CD4-positive, alpha-beta T cell (primary cell): ENCODE measurements at regions of chr13 and their contacts with region 1.

Region 1: DNA sequence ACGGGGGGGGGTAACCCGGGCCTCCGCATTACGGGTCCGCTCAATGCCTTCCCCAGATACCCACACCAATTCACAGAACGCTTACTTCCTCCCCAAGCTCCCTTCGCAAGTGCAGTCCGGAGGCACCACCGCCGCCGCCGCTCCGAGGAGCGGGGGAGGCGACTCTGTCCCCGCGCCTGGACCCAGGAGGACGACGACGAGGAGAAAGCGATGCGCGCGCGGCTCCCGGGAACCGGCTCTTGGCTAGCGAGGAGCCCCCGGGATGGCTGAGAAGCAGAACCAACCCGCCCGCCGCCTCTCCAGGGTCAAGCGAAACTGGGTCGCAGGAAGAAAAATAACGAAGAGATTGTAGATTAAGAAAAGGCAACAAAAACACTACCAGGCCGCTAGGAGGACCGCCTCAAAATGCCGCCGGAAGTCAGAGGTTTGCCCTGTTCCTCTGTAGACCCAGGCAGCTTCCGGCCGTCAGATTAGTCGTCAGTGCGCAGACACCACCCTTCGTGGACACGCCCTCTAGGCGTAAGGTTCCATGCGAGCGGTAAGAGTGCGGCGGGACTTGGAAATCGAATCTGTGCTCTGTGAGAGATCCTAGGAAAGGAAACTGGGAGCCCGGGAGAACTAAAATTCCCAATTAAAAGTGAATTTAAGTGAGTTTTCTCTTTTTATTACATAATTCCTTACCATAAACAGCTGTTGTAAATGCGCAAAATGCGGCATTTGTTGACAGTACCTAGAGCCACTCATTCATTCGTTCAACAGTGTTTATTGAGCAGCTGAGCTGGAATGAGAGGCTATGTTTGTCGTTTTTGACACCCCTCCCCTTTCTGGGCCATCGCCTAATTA is at the start of gene ZC3H13:
- DNase-seq: peak; percentile 87 to 98 (median 89)
- ATAC-seq: peak; percentile 96
- H3K4me3 ChIP-seq: peak within 1 kb of the TSS; percentile 84
- H3K4me3 Mint-ChIP-seq: peak within 1 kb of the TSS; percentile 91
- H3K27ac ChIP-seq: peak within 1 kb of the TSS; percentile 97
- H3K27ac Mint-ChIP-seq: peak within 1 kb of the TSS; percentile 86
- H3K4me1 ChIP-seq: peaks cover 2% of the 10 kb centered on the region
- H3K4me1 Mint-ChIP-seq: peaks cover 53% of the 10 kb centered on the region
- H3K27me3 ChIP-seq: peaks cover 0 to 10% of the 10 kb centered on the region in 2 experiments
- H3K27me3 Mint-ChIP-seq: peaks cover 22% of the 10 kb centered on the region
- CTCF ChIP-seq: peak; percentile 48
- total RNA-seq, gene ZC3H13: 36.5 to 43.8 TPM

Region 2: DNA sequence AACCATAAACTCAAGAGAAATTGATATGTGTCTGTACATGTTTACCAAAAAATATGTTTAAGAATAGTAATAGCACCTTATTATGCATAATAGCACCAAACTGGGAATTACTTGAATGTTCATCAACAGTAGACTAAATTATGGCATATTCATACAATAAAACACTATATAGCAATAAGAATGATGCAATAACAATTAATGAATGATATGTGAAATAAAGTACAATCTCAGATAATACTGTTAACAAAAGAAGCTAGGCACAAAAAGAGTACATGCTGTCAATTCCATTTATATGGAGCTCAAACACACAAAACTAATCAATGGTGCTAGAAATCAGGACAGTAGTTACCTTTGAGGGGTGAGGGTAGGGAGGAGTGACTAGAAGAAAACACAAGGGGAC is 36.3 kb before region 1 on chr13:
- CTCF ChIA-PET with region 1: no interaction called
- POLR2A ChIA-PET with region 1: no interaction called
- intact Hi-C with region 1: no loop called
- DNase-seq: no peak
- ATAC-seq: no peak
- H3K4me3 ChIP-seq: no peak overlapping the region
- H3K4me3 Mint-ChIP-seq: no peak overlapping the region
- H3K27ac ChIP-seq: no peak overlapping the region
- H3K27ac Mint-ChIP-seq: no peak overlapping the region
- H3K4me1 ChIP-seq: no peaks in the 10 kb centered on the region
- H3K4me1 Mint-ChIP-seq: no peaks in the 10 kb centered on the region
- H3K27me3 ChIP-seq: no peaks in the 10 kb centered on the region
- H3K27me3 Mint-ChIP-seq: no peaks in the 10 kb centered on the region
- CTCF ChIP-seq: no peak

Region 3: DNA sequence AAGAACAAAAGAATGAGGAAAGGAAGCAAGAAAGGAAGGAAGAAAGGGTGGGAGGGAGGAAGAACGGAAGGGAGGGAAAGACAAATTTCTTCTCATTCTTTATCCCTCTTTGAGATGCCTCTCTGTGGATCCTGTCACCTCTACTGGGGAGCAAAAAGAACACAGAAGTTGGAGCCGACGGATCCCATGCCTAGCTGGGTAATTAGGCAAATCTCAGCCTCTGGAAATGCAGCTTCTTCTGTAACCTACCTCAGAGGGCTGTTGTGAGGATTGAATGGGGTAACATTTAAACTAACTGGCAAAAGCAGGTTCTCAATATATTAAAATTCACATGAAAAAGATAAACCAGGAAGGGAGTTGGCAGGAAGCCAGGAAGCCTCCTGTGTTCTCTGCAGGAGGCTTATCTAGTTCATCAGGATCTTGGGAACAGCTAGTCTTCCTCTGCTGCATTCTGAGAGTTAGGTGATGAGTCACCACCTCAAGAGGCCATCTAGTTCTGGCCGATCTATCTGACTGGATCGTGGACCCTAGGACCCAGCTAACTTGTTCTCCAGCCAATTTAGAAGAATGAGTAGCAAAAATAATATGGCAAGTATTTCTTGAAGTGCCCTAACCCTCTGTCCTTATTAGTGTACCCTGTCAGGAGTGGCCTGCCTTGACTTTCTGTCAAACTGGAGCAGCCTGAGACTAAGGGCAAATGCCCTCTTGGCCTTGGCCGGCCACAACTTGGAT is 67.5 kb after region 1 on chr13:
- CTCF ChIA-PET with region 1: no interaction called
- POLR2A ChIA-PET with region 1: interaction called, 18 read pairs
- intact Hi-C with region 1: loop called in 1 of 2 experiments (anchors 5 kb)
- DNase-seq: peak in 1 of 14 experiments; percentile 16
- ATAC-seq: no peak
- H3K4me3 ChIP-seq: no peak overlapping the region
- H3K4me3 Mint-ChIP-seq: no peak overlapping the region
- H3K27ac ChIP-seq: no peak overlapping the region
- H3K27ac Mint-ChIP-seq: no peak overlapping the region
- H3K4me1 ChIP-seq: peaks cover 13% of the 10 kb centered on the region
- H3K4me1 Mint-ChIP-seq: peaks cover 40% of the 10 kb centered on the region
- H3K27me3 ChIP-seq: no peaks in the 10 kb centered on the region
- H3K27me3 Mint-ChIP-seq: no peaks in the 10 kb centered on the region
- CTCF ChIP-seq: no peak

Region 4: DNA sequence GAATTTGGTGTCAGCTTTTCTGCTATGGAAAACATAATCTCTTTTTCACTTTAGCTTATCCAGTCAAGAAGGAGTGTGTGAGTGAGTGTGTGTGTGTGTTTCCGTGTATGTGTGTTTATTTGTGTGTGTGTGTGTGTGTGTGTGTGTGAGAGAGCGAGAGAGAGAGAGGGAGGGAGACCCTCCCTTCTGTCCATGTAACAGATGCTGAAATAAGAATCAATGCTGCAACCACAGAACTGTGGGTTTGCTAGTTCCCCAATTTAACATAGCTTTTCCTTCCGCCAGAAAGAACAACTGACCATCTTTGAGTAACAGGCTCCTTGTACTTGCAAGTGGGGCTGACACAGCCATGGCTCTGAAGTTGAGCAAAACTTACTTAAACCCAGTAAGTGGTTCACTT is 124.2 kb after region 1 on chr13:
- CTCF ChIA-PET with region 1: interaction called, 3 read pairs
- POLR2A ChIA-PET with region 1: interaction called, 7 read pairs
- intact Hi-C with region 1: loop called (anchors 5 kb)
- DNase-seq: peak in 4 of 14 experiments; percentile 38 to 71 (median 60)
- ATAC-seq: no peak
- H3K4me3 ChIP-seq: peak overlapping the region; percentile 84
- H3K4me3 Mint-ChIP-seq: peak overlapping the region; percentile 72
- H3K27ac ChIP-seq: peak overlapping the region; percentile 58 to 75
- H3K27ac Mint-ChIP-seq: peak overlapping the region; percentile 98
- H3K4me1 ChIP-seq: peaks cover 46% of the 10 kb centered on the region
- H3K4me1 Mint-ChIP-seq: peaks cover 77% of the 10 kb centered on the region
- H3K27me3 ChIP-seq: no peaks in the 10 kb centered on the region
- H3K27me3 Mint-ChIP-seq: no peaks in the 10 kb centered on the region
- CTCF ChIP-seq: no peak